PC-9 (cell line): ENCODE measurements at regions of chr6 and their contacts with region 1.

Region 1: DNA sequence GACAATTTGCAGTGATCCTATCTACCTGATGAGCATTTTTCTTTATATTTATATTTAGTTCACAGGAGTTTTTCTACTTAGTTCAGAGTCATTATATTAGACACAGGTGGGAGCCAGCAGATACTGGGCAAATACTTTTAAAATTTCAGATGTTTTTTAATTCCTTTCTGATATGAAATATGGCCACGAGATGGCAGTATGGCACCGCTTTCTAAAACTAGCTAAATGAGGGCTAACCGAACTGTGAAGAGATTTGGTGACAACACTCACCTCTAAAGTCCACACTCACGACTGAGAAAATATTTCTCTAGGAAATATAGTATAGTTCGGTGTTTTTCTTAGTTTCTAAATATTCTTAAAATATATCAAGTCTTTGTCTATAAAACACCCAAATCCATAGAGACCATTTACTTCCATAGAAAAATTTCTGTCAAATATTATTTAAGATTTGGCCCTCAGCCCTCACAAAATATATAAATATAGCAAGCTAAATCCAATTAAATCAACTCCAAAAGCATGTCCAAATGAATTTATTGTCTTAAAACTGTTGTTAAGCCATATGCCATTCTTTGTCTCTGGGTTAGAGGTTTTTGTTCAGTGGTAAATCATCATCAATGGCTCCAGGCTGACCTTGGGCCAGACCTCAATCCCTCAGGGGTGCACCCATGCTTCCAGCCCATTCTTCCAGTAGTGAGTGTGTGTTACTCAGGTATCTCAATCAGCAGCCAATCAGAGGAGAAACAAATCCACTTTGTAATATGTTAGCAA is 63.6 kb downstream of the HUS1B start:
- DNase-seq: peak; percentile 31 to 48
- H3K4me3 ChIP-seq: no peak overlapping the region
- H3K27ac ChIP-seq: no peak overlapping the region
- H3K4me1 ChIP-seq: no peaks in the 10 kb centered on the region
- H3K27me3 ChIP-seq: no peaks in the 10 kb centered on the region
- CTCF ChIP-seq: peak; percentile 68

Region 2: GRCh38 chr6:1381481-1382330 is 788.4 kb after region 1 on chr6:
- CTCF ChIA-PET with region 1: interaction called, 6 read pairs
- POLR2A ChIA-PET with region 1: no interaction called
- intact Hi-C with region 1: loop called (anchors 5 kb)
- DNase-seq: peak in 1 of 2 experiments; percentile 73
- H3K4me3 ChIP-seq: peak overlapping the region; percentile 49; the same call in 1 of the 2 replicates
- H3K27ac ChIP-seq: no peak overlapping the region
- H3K4me1 ChIP-seq: no peaks in the 10 kb centered on the region
- H3K27me3 ChIP-seq: no peaks in the 10 kb centered on the region
- CTCF ChIP-seq: peak; percentile 67

Region 3: GRCh38 chr6:1436334-1437306 is 843.3 kb after region 1 on chr6:
- CTCF ChIA-PET with region 1: no interaction called
- POLR2A ChIA-PET with region 1: no interaction called
- intact Hi-C with region 1: loop called (anchors 5 kb)
- DNase-seq: peak; percentile 52 to 57
- H3K4me3 ChIP-seq: no peak overlapping the region
- H3K27ac ChIP-seq: no peak overlapping the region
- H3K4me1 ChIP-seq: no peaks in the 10 kb centered on the region
- H3K27me3 ChIP-seq: no peaks in the 10 kb centered on the region
- CTCF ChIP-seq: peak; percentile 73